ENCODE measurements at regions of chr4 and their contacts with region 1.

Region 1: GRCh38 chr4:185127021-185127925 is 15.8 kb upstream of the SLC25A4 start:
- DNase-seq: peak; percentile 55 to 78
- ATAC-seq: peak; percentile 59
- H3K4me3 ChIP-seq: peak overlapping the region; percentile 51 to 55
- H3K27ac ChIP-seq: no peak overlapping the region
- H3K4me1 ChIP-seq: no peaks in the 10 kb centered on the region
- H3K27me3 ChIP-seq: no peaks in the 10 kb centered on the region

Region 2: GRCh38 chr4:185082561-185082960 is 44.7 kb before region 1 on chr4:
- intact Hi-C with region 1: loop called in 1 of 2 experiments (anchors 2 kb)
- DNase-seq: no peak
- ATAC-seq: no peak
- H3K4me3 ChIP-seq: no peak overlapping the region
- H3K27ac ChIP-seq: no peak overlapping the region
- H3K4me1 ChIP-seq: no peaks in the 10 kb centered on the region
- H3K27me3 ChIP-seq: no peaks in the 10 kb centered on the region

Region 3: DNA sequence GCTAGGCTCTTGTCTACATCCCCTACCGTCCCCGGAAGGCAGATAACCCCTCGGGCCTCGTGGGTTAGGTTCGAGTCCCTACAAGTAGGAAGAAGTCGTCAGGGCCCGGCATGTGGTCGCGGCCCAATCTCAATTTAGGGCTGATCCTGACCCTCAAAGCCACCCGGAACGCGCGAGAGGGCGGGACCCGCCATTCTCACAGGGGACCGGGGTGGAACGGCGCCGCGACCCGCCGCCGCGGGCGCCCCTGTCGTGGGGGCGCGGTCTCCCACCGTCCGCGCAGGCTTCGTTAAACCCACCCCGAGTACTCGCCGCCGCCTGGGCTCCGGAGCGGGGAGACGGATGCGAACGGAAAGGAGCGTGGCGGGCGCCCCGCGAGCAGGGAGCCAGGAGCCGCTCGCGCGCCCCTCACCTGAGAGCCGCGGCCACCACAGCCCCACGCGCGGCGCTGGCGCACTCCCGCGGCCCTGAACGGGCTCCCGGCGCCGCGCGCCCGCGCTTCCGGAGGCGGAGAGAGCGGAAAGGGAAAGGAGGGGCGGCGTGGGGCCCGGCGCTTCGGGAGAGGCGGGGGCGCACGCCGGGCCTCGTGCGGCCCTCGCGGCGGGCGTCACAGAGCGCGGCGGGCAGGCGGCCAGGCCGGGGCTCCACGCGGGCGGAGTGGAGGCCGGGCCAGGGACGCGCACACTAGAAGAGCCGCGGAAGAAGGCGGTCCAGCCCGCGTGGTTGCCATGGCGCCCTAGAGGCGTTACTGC is 76.4 kb after region 1 on chr4 and contains the start of gene CFAP97:
- intact Hi-C with region 1: no loop called
- DNase-seq: peak; percentile 95 to 99
- ATAC-seq: peak; percentile 95
- H3K4me3 ChIP-seq: peak within 1 kb of the TSS; percentile 70 to 85
- H3K27ac ChIP-seq: peak within 1 kb of the TSS; percentile 85 to 91
- H3K4me1 ChIP-seq: peaks cover 0 to 2% of the 10 kb centered on the region in 2 donors
- H3K27me3 ChIP-seq: no peaks in the 10 kb centered on the region
- total RNA-seq, gene CFAP97: 49.8 to 58.4 TPM